ENCODE measurements at regions of chr18 and their contacts with region 1.

Region 1: GRCh38 chr18:11518788-11519685 is 90.4 kb upstream of the SLC35G4 start:
- DNase-seq: peak; percentile 67
- H3K4me3 Mint-ChIP-seq: no peak overlapping the region
- H3K27ac Mint-ChIP-seq: no peak overlapping the region
- H3K4me1 Mint-ChIP-seq: peaks cover 15% of the 10 kb centered on the region
- H3K27me3 Mint-ChIP-seq: peaks cover 17% of the 10 kb centered on the region
- CTCF ChIP-seq: peak; percentile 60

Region 2: GRCh38 chr18:11387880-11388279 is 131.2 kb before region 1 on chr18:
- CTCF ChIA-PET with region 1: interaction called, 3 read pairs
- POLR2A ChIA-PET with region 1: no interaction called
- intact Hi-C with region 1: loop called (anchors 10 kb)
- DNase-seq: peak; percentile 84
- H3K4me3 Mint-ChIP-seq: no peak overlapping the region
- H3K27ac Mint-ChIP-seq: no peak overlapping the region
- H3K4me1 Mint-ChIP-seq: peaks cover 6% of the 10 kb centered on the region
- H3K27me3 Mint-ChIP-seq: peaks cover 14% of the 10 kb centered on the region
- CTCF ChIP-seq: peak; percentile 46

Region 3: DNA sequence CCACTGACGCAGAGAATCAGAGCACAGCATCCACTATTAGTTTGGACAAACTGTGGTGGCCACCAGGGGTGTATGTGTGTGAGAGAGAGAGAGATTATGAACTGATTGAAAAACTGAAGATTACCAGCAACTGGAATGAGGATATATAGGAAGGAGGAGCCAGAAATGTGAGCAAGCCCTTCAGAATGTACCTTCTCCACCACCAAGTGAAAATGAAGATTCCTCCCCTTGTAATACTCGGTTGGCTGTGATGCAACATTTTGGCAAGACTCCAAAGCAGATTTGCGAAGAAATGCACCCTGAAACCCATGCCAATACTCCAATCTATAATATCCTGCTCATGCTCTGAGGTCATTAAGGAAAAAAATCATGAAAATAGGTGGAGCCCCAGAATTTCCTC is 30.9 kb before region 1 on chr18:
- CTCF ChIA-PET with region 1: no interaction called
- POLR2A ChIA-PET with region 1: no interaction called
- intact Hi-C with region 1: no loop called
- DNase-seq: peak; percentile 67
- H3K4me3 Mint-ChIP-seq: peak overlapping the region; percentile 2
- H3K27ac Mint-ChIP-seq: no peak overlapping the region
- H3K4me1 Mint-ChIP-seq: peaks cover 10% of the 10 kb centered on the region
- H3K27me3 Mint-ChIP-seq: no peaks in the 10 kb centered on the region
- CTCF ChIP-seq: no peak

Region 4: DNA sequence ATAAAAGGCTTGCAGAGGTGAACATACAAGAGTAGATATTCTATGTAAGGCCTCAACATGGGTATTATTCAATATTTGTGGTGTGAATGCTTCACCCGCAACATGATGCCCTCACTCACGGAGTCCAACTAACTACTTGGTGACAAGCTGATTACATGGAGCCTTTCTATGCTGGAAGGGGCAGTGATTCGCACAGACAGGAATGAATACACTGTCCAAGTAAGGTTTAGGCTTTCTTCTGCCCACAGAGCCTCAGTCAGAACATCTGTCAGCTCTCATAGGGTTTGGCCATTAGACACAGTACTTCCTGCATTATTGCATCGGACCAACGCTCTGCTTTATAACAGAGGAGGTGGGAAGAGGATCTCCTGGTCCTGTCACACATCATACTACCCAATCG is 10.0 kb after region 1 on chr18:
- CTCF ChIA-PET with region 1: interaction called, 13 read pairs
- POLR2A ChIA-PET with region 1: no interaction called
- intact Hi-C with region 1: no loop called
- DNase-seq: no peak
- H3K4me3 Mint-ChIP-seq: no peak overlapping the region
- H3K27ac Mint-ChIP-seq: no peak overlapping the region
- H3K4me1 Mint-ChIP-seq: peaks cover 6% of the 10 kb centered on the region
- H3K27me3 Mint-ChIP-seq: no peaks in the 10 kb centered on the region
- CTCF ChIP-seq: no peak